Activated naive CD4-positive, alpha-beta T cell treated with anti-CD3 and anti-CD28 coated beads for 36 hours (primary cell): ENCODE measurements at regions of chr6 and their contacts with region 1.

Region 1: DNA sequence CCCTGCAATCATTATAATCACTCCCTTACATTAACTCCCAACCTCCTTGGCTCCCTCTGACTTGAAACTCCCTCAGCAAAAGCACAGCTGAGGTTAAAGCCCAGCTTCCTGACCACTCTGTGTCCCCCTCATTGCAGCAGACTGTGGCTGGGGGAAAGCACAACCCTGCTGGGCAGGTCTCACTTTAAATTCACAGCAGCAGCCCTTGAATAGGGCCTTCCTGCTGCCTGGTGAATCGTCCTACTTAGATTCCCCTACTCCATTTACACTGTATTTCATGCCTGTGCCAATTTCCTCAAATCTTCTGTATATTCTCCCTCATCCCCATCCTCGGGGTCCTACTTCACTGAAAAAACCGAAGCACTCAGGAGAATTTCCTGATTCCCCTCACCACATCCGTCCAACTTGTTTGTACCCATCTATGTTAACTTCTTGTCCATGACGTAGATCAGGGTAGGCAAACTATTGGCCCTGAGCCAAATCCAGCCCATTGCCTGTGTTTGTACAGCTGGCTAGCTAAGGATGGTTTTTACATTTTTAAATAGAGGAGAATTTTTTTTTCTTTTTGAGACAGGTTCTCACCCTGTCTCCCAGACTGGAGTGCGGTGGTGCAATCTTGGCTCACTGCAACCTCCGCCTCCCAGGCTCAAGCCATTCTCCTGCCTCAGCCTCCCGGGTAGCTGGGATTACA is 31.5 kb upstream of the GCM1 start:
- DNase-seq: peak; percentile 55
- H3K4me3 Mint-ChIP-seq: no peak overlapping the region
- H3K27ac Mint-ChIP-seq: no peak overlapping the region
- H3K4me1 Mint-ChIP-seq: peaks cover 12% of the 10 kb centered on the region
- H3K27me3 Mint-ChIP-seq: no peaks in the 10 kb centered on the region

Region 2: DNA sequence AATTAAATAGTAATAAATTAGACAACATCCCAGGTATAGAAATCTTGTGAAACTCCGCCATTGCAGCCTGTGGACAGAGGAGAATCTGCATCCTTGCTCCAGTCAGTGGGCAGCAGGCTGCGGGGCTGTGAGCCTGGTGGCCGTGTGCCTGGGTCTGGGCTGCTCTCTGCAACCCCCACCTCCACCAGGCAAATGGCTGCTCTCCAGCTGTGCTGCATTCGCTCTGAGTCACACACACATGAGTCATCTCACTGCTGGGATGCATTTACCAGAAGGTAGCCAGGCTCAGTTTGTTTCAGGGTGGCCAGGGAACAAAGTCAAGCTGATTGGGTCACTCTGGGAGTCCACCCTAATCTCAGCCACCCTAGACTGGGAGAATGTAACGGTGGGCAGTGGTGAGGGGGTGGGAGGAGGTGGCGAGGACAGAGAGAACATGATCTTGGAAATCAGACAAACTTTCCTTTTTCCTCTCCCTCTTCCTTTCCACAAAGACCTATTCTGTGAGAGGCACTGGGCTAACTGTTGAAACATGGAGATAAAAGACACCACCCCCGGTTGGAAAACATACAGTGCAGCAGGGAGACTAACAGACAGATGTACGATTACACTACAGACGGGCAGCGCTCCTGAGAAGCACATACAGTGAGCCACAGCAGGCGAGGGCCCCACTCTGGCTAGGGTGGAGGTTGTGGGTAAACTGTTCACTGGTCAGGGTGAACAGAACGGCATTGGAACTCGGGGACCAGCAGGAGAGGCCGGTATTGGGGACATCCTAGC is 662.4 kb before region 1 on chr6:
- CTCF ChIA-PET with region 1: no interaction called
- intact Hi-C with region 1: no loop called
- DNase-seq: peak; percentile 78
- H3K4me3 Mint-ChIP-seq: no peak overlapping the region
- H3K27ac Mint-ChIP-seq: peak overlapping the region; percentile 48
- H3K4me1 Mint-ChIP-seq: peaks cover 7% of the 10 kb centered on the region
- H3K27me3 Mint-ChIP-seq: no peaks in the 10 kb centered on the region

Region 3: GRCh38 chr6:53294095-53294494 is 114.0 kb after region 1 on chr6:
- CTCF ChIA-PET with region 1: interaction called, 3 read pairs
- intact Hi-C with region 1: loop called (anchors 5 kb)
- DNase-seq: no peak
- H3K4me3 Mint-ChIP-seq: no peak overlapping the region
- H3K27ac Mint-ChIP-seq: no peak overlapping the region
- H3K4me1 Mint-ChIP-seq: peaks cover 65% of the 10 kb centered on the region
- H3K27me3 Mint-ChIP-seq: no peaks in the 10 kb centered on the region